Activated naive CD4-positive, alpha-beta T cell treated with anti-CD3 and anti-CD28 coated beads for 36 hours (primary cell): ENCODE measurements at regions of chr16 and their contacts with region 1.

Region 1: GRCh38 chr16:57300387-57301125 is 16.1 kb upstream of the PLLP start:
- DNase-seq: peak; percentile 100
- H3K4me3 Mint-ChIP-seq: no peak overlapping the region
- H3K27ac Mint-ChIP-seq: no peak overlapping the region
- H3K4me1 Mint-ChIP-seq: peaks cover 8% of the 10 kb centered on the region
- H3K27me3 Mint-ChIP-seq: peaks cover 2% of the 10 kb centered on the region

Region 2: DNA sequence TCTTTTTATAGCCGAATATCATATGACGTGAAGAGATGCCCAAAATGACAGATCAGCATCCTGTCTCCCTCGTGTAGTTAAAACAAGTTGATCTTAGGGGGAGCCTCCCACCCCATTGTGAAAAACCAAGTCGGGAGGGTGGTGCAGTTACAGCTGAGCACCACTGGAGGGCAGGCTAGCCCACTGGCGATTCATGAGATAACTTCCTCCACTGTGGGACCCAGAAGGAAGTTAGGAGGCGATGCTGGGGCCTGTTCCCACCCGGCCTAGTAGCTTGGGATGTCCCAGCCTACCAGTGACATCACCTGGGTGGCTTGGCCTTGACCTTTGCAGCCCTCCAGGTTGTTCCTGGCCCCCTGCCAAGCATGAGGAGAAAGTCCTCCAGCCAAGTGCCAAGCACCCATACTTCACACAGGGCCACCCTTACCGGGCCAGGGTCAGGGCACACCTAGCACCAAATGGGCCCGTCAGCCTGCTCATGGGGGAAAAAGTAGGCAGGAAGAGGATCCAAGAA is 216.2 kb before region 1 on chr16:
- CTCF ChIA-PET with region 1: interaction called, 14 read pairs
- intact Hi-C with region 1: loop called (anchors 1 kb)
- DNase-seq: peak; percentile 86
- H3K4me3 Mint-ChIP-seq: no peak overlapping the region
- H3K27ac Mint-ChIP-seq: peak overlapping the region; percentile 73
- H3K4me1 Mint-ChIP-seq: peaks cover 9% of the 10 kb centered on the region
- H3K27me3 Mint-ChIP-seq: no peaks in the 10 kb centered on the region

Region 3: DNA sequence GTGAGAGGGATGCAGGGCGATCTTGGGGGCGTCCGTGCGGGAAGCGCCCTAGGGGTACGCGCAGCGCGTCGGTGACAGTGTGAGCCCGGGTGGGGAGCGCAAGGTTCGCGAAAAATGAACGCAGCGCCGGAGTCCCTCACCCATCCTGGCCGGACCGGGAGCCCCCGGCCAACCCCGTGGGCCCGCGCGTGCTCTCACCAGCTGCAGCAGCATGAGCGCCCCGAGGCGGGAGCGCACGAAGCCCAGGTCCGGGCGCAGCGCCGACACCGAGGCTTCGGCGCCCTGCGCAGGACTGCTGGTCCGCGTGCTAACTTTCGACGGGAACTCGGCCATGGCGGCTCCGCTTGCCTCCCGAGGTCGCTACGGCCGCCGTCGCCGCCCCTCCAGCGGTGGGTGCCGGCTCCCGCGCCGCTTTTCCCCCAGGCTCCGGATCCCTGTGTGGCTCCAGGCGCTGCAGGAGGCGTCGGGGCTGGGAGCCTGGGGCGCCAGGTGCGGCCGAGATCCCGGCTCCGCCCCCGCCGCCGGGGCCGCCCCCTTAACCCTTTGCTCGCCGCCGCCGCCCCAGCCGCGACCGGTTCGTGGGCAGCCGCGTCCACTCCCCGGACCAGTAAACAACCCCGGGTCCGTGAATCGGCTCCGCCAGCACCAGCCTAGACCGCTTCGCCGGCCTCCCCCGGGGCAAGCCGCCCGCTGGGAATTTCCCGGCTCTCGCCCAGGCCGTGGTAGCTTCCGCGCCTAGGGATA is 16.2 kb before region 1 on chr16 and contains the start of gene PLLP:
- CTCF ChIA-PET with region 1: interaction called, 6 read pairs
- intact Hi-C with region 1: loop called (anchors 1 kb)
- DNase-seq: peak; percentile 35
- H3K4me3 Mint-ChIP-seq: peak within 1 kb of the TSS; percentile 79
- H3K27ac Mint-ChIP-seq: peak within 1 kb of the TSS; percentile 24
- H3K4me1 Mint-ChIP-seq: peaks cover 25% of the 10 kb centered on the region
- H3K27me3 Mint-ChIP-seq: no peaks in the 10 kb centered on the region
- total RNA-seq, gene PLLP: 0.25 to 0.41 TPM

Region 4: GRCh38 chr16:57377080-57377841 is 76.7 kb after region 1 on chr16:
- CTCF ChIA-PET with region 1: interaction called, 6 read pairs
- intact Hi-C with region 1: loop called (anchors 2 kb)
- DNase-seq: peak; percentile 40
- H3K4me3 Mint-ChIP-seq: no peak overlapping the region
- H3K27ac Mint-ChIP-seq: no peak overlapping the region
- H3K4me1 Mint-ChIP-seq: peaks cover 10% of the 10 kb centered on the region
- H3K27me3 Mint-ChIP-seq: no peaks in the 10 kb centered on the region

Region 5: GRCh38 chr16:57447186-57447962 is 146.8 kb after region 1 on chr16 and contains the starts of genes CIAPIN1 and COQ9:
- CTCF ChIA-PET with region 1: no interaction called
- intact Hi-C with region 1: loop called (anchors 1 kb)
- DNase-seq: peak; percentile 96
- H3K4me3 Mint-ChIP-seq: peak within 1 kb of the TSS; percentile 86
- H3K27ac Mint-ChIP-seq: peak within 1 kb of the TSS; percentile 86
- H3K4me1 Mint-ChIP-seq: peaks cover 42% of the 10 kb centered on the region
- H3K27me3 Mint-ChIP-seq: no peaks in the 10 kb centered on the region
- total RNA-seq, gene CIAPIN1: 29.5 to 31.0 TPM
- total RNA-seq, gene COQ9: 30.6 TPM

Region 6: GRCh38 chr16:57519796-57520360 is 219.3 kb after region 1 on chr16:
- CTCF ChIA-PET with region 1: interaction called, 18 read pairs
- intact Hi-C with region 1: loop called (anchors 1 kb)
- DNase-seq: peak; percentile 87
- H3K4me3 Mint-ChIP-seq: no peak overlapping the region
- H3K27ac Mint-ChIP-seq: peak overlapping the region; percentile 73
- H3K4me1 Mint-ChIP-seq: peaks cover 4% of the 10 kb centered on the region
- H3K27me3 Mint-ChIP-seq: no peaks in the 10 kb centered on the region

Region 7: GRCh38 chr16:57734925-57735754 is 434.6 kb after region 1 on chr16:
- CTCF ChIA-PET with region 1: no interaction called
- intact Hi-C with region 1: loop called (anchors 1 kb)
- DNase-seq: peak; percentile 98
- H3K4me3 Mint-ChIP-seq: peak overlapping the region; percentile 91
- H3K27ac Mint-ChIP-seq: peak overlapping the region; percentile 96
- H3K4me1 Mint-ChIP-seq: peaks cover 19% of the 10 kb centered on the region
- H3K27me3 Mint-ChIP-seq: no peaks in the 10 kb centered on the region